Sigmoid colon (tissue), 7 donors: ENCODE measurements at regions of chr16 and their contacts with region 1.

Region 1: DNA sequence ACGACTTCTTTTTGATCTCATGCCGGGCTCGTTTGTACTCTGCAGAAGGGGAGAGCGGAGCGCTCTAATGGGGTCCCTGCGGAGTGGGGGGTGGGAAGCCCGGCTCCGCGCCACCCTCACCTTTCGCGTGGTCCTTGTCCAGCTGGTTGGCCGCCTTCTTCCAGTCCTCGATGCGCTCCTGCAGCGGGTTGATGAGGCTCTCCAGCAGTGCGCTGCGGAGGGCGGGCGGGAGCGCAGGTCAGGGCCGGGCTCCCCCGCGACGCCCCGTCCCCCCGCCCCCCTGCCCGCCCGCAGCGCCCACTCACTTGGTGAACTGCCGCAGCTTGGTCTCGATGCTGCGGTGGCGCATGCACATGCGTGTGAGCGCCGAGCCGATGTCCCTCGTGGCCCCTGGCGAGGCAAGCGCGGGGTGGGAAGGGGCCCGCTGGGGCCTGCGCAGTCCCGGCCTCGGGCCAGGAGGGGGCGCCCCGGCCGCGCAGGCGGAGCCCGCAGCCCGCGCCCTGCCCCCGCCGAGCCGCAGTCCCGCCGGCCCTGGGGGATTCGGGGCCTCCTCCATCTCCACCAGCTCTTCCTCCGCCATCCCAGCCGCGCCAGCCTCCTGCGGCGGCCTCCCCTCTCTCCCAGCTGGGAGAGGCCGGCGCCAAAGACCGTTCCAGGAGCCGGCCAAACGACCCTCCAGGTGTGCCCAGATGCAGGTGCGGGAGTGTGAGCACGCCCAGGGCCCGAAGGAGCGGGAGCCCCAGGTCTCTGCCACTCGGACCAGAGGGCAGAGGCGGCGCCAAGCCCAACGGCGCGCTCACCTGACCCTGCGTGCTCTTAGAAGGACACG is 6.0 kb downstream of the MTSS2 start:
- DNase-seq: no peak
- H3K4me3 ChIP-seq: no peak overlapping the region
- H3K27ac ChIP-seq: peak overlapping the region; percentile 86 to 99 (median 96)
- H3K4me1 ChIP-seq: peaks cover 0 to 70% (median 54%) of the 10 kb centered on the region in 4 donors
- H3K27me3 ChIP-seq: no peaks in the 10 kb centered on the region
- CTCF ChIP-seq: peak in 2 of 4 experiments; percentile 14 to 78
- EP300 ChIP-seq: no peak
- POLR2A ChIP-seq: no peak

Region 2: DNA sequence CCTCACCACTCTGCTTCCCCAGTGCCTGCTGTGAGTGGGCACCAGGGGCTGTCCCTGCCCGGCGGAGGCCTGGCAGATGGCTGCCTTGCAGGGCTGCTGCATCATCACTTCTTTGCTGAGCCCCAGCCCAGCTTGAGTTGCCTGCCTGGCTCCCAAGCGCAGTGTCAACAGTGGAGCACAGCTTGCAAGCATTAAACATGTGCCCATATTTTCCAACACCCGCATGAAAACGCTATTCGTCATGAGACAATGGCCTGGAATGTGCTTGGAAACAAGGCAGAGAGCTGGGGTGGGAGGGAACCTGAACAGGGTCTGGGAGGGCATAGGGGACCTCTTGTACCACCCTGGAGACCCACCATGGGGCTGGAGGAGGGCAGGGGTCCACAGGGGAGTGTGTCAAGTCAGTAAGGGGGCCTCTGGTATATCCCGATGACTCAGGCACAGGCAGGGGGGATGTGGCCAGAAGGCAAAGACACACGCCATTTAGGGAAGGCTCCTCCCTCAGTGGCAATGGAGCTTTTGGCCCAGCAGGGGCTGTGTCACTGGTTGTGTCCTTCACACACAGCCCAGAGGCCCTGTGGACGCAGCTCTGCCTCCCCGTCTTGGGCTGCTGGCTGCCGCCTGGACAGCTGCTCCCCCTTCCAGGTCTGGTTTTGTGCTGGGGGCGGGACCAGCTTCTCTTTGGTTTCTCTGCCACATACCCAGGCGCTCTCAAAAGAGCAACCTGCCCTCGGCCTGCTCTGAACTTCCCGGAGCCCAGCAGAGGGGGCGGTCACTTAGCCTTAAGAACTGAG is 23.4 kb after region 1 on chr16:
- intact Hi-C with region 1: no loop called
- DNase-seq: peak; percentile 94
- H3K4me3 ChIP-seq: no peak overlapping the region
- H3K27ac ChIP-seq: peak overlapping the region; percentile 92 to 99 (median 98)
- H3K4me1 ChIP-seq: peaks cover 6 to 98% (median 94%) of the 10 kb centered on the region in 4 donors
- H3K27me3 ChIP-seq: no peaks in the 10 kb centered on the region
- CTCF ChIP-seq: peak in 3 of 4 experiments; percentile 42 to 56 (median 43)
- EP300 ChIP-seq: peak in 3 of 4 donors; percentile 89 to 96 (median 91)
- POLR2A ChIP-seq: peak in 1 of 2 donors; percentile 32

Region 3: DNA sequence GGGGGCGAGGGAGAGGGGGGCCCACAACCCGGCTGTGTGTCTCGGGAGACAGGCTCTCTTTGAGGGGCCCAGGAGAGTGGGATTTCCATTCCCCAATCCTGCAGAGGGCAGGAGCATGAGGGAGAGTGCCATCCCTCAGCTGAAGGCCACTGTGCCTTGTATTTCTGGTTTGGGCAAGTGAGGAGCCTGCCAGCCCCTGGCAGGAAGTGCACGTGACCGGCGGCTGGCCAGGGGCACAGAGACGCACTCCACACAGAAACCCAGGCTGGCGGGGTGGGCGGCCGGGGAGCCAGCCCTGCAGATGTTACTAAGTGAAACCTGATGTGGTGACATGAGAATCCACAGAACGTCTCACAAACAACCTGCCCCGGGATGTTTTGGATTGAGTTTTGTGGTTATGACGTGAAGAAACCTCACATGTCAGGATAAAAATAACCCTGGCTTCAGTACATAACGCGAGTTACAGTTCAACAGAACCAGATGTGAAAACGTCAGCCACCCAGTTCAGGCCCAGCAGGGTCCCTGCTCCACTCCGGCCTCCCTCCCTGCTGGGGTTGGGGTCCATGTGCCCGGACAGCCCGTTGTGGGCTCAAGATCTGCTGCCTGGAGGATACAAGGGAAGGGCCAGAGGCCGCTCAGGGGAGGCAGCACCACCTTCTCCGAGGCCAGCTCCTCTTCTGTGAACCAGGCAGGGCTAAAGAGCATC is 57.6 kb after region 1 on chr16:
- intact Hi-C with region 1: loop called (anchors 1 kb)
- DNase-seq: peak; percentile 91
- H3K4me3 ChIP-seq: no peak overlapping the region
- H3K27ac ChIP-seq: peak overlapping the region; percentile 84 to 98 (median 91)
- H3K4me1 ChIP-seq: peaks cover 0 to 66% (median 55%) of the 10 kb centered on the region in 4 donors
- H3K27me3 ChIP-seq: no peaks in the 10 kb centered on the region
- CTCF ChIP-seq: no peak
- EP300 ChIP-seq: peak; percentile 77 to 96 (median 91)
- POLR2A ChIP-seq: peak in 1 of 2 donors; percentile 20

Region 4: DNA sequence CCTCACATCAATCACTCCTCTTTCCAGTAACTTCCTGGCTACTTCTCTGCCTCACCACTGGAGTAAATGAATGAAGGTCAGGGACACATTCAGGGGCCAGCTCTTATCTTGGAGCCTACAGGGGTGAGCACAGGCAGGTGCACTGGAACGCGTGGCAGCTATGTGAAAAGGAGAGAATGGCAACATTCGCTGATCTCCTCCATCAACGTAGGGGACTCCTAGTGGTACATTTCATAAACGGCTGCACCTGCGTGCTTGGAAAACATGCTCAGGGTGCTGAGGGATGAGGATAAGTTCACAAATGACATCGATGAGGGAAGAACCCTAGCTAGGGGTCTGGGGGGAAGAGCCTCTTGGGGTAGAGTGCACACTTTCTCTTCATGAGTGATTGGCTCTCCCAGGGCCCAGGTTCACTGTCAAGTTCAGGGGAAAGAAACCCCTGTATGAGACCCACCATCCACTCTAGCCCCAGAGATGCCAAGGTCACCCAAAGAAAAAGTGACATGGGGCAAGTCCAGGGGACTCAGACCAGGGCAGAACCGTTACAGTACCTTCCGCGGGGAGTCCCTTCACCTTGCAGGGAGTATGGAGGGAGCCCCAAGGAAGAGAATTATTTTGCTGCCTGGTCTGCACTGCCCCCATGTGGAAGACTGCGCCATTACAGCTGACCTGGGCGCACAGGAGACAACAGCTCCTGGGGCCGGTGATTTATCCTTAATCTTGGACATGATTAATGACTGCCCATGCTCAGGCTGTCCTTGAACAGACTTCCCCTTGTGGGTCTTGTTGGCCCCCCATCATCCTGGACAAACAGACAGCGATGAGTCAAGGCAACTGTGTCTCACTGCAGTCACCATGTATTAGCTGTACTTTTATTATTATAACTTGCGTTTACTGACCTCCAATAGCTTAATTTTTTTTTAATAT is 91.0 kb after region 1 on chr16:
- intact Hi-C with region 1: loop called (anchors 1 kb)
- DNase-seq: no peak
- H3K4me3 ChIP-seq: no peak overlapping the region
- H3K27ac ChIP-seq: no peak overlapping the region
- H3K4me1 ChIP-seq: peaks cover 0 to 8% (median 6%) of the 10 kb centered on the region in 4 donors
- H3K27me3 ChIP-seq: no peaks in the 10 kb centered on the region
- CTCF ChIP-seq: peak; percentile 85 to 98 (median 94)
- EP300 ChIP-seq: no peak
- POLR2A ChIP-seq: no peak